Activated T-helper 1 cell treated with anti-CD3 and anti-CD28 coated beads, Interleukin-12 subunit alpha, Interleukin-12 subunit beta, Interleukin-2, Interleukin-4 antibody, amounts not matched to agents 30 ng/mL and 10 ng/mL and 1 ng/mL, durations not matched to agents 14 hours and 24 hours and 36 hours (primary cell): ENCODE measurements at regions of chr4 and their contacts with region 1.

Region 1: GRCh38 chr4:83340692-83341343 is 6.2 kb upstream of the HPSE start:
- DNase-seq: peak; percentile 48
- H3K4me3 Mint-ChIP-seq: peak overlapping the region; percentile 23
- H3K27ac Mint-ChIP-seq: peak overlapping the region; percentile 98
- H3K4me1 Mint-ChIP-seq: peaks cover 30% of the 10 kb centered on the region
- H3K27me3 Mint-ChIP-seq: peaks cover 26% of the 10 kb centered on the region

Region 2: GRCh38 chr4:83276299-83277040 is 64.3 kb before region 1 on chr4:
- intact Hi-C with region 1: loop called (anchors 2 kb)
- DNase-seq: no peak
- H3K4me3 Mint-ChIP-seq: no peak overlapping the region
- H3K27ac Mint-ChIP-seq: peak overlapping the region; percentile 79
- H3K4me1 Mint-ChIP-seq: peaks cover 30% of the 10 kb centered on the region
- H3K27me3 Mint-ChIP-seq: peaks cover 2% of the 10 kb centered on the region

Region 3: DNA sequence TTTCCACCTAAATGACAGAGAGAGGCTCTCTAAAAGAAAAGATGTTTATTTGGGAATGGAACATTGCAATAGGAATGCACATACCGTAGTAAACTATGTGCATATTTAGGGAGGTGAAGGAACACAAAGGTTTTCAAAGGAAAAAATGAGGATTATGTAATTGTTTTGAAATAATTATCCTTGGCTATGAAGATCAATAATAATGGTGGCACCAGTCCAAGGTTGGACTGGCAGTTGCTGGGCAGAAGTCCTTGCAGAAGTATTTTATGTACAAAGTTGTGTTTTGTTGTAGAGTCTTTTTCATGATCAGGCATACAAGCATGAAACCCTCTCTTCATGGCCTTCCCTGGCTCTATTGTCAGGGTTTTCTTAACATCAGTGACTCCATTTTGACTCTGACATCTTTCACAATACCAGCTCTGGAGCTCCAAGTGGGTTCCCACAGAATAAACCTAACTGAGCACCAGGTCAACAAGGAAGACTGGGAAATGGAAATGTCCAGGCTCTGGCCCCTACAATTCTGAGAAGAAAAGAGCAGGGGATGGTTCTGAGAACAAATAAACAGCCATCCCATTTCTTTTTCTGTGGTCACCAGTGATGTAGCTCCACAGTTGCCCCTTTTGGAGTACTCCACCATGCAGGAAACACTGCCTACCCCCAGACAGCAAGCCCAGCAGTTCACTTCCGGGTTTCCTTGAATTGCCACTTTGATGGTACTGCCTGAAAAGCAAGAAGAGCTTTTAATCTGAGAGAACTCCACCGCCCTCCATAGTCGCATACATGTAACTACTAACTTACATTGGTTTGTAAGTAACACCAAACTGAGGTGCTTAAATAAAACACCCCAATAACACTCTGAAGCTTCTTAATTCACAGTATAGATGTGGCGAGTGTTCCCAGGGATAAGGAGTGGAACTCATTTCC is 47.2 kb after region 1 on chr4:
- intact Hi-C with region 1: loop called (anchors 5 kb)
- DNase-seq: peak; percentile 20
- H3K4me3 Mint-ChIP-seq: no peak overlapping the region
- H3K27ac Mint-ChIP-seq: no peak overlapping the region
- H3K4me1 Mint-ChIP-seq: peaks cover 11% of the 10 kb centered on the region
- H3K27me3 Mint-ChIP-seq: no peaks in the 10 kb centered on the region